ENCODE measurements at regions of chr11 and their contacts with region 1.

Region 1: DNA sequence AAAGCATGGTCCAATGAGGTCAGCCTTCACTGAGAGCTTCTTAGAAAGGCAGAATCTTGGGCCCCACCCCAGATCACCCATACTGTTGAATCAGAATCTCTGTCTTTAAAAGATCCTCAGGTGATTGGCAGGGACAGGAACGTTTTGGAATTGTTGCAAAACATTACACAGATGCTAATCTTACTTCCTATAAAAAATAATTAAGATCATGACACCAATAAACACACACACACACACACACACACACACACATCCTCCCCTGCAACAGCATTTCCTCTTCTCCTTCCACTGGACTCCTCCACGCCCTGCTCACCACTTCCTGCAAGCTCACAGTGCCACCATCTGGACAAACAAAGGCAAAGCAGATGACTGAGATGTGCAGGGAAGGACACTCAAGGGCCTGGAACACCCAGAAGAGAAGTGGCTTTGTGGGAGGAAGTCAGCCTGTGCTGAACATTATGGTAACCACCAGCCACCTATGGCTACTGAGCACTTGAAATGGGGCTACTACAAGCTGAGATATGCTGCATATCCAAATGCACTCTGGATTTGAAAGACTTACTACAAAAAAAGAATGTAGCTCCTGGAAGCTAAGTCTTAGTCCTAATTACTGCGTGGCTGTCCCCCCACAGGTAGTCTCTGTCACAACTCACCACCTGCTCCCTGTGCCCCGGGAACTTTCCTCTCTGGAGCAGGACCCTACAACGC is 65.6 kb downstream of the BTG4 start:
- DNase-seq: peak; percentile 89
- CTCF ChIP-seq: peak; percentile 93

Region 2: GRCh38 chr11:111283945-111284481 is 162.5 kb before region 1 on chr11:
- CTCF ChIA-PET with region 1: interaction called, 122 read pairs
- POLR2A ChIA-PET with region 1: interaction called, 7 read pairs
- DNase-seq: no peak
- CTCF ChIP-seq: no peak

Region 3: DNA sequence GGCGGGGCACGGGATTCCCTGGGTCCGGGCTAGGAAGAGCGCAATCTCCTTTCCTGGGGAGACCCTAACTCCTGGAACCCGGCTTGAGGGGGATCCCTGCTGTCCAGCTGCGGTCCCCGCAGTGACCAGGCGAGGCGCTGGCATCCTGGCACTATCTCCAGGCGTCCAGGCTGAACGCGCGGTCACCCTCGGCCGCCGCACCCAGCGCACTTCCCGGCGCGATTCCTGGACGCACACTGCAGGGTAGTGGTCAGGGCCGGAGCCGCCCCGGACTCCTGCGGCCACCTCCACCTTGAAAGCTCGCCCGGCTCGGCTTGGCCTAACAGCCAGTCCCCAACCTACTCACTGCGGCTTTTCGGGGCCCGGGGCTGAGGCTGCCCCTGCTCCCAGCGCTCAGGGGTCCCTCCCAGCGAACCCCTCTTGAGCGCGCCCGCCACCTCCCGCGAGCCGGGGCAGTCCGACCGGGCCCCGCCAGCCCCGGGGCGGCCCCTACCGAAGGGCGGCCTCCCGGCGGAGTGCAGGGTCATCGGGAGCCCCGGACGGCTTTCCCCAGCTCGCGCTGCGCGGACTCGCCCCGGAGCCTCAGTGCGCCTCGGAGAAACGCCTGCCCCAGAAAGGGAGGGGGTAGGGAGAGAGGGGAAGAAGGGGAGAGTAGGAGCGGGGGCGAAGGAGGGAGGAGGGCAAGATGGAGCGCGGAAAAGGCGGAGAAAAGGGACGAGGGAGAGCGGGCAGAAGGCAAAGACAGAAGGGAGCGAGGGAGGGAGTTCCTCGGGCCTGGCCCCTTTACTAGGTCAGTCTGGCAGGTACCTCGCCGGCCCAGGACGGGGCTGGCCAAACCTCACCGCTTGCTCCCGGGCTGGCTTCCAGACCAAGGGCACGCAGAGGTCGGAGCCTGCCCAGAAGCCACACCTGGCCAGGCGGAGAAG is 147.2 kb before region 1 on chr11:
- CTCF ChIA-PET with region 1: interaction called, 11 read pairs
- POLR2A ChIA-PET with region 1: no interaction called
- DNase-seq: peak; percentile 63
- CTCF ChIP-seq: peak; percentile 54

Region 4: DNA sequence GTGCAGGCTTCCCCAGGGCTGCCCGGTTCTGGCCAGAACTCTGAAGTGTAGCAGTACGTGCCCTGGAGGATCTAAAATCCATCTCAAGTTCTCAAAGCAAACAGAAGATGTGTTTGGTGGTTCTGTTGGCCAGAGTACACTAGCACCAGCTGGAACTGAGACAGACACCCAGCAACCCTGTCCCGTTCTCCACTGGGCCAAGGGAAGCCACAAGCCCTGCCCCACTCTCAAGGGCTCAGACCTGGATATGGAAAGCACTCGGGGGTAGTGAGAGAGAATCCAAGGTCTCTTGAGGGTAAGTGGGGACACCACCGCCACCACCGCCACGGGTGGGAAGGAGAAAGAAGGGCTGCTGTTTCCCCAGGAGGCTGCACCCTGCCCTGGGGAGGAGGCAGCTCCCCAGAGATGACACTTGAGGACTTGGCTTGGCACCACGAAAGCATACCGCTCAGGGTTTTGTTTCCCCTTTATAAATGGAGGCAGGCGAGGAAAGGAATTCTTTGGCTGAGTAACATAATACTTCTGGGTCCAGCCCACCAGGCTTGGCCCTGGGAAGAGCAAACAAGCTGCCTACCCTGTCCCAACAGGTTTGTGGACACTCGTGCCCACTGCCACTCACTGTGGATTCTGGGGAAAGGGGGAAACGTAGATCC is 11.4 kb before region 1 on chr11:
- CTCF ChIA-PET with region 1: interaction called, 75 read pairs
- POLR2A ChIA-PET with region 1: no interaction called
- DNase-seq: no peak
- CTCF ChIP-seq: no peak

Region 5: DNA sequence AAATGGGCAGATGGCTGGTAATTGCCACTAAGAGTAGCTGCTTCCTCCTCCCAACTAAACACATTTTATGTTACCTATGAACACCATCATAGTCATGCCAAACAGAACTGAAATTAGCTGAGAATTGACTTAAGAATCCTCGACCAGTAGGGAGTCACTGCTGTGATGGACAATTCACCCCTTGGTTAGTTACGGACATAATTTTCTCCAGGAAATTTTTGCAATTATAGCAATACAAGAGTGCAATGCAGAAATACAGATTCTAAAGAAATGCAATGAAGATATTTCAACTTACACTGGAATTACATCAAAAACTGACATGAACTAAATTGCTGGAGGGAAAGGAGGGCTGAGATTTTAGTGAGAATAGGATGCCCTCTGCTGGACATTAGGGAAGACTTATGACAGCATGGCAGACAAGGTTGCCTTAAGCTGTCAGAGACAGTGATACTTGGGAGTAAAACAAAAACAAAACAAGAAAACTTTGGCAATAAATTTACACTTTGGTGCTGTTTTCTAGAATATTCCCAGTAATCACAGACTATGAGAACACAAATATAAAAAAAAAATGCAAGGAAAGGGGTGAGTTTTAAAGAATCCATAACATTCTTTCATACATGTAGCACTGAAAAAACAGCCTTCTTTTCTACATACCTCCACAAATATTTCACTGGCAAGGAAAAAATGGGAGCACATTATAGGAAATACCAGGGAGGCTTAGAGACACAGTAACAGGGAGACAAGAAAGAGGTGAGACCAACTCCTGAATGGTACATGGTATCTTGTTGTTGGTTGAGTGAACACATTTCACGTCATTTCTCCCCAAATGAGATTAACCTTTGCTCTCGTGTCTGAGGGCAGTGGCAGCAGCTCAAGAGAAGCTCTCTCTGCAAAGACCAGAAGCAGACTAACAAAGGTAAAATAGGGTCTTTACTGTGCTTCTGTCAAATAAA is 330.8 kb after region 1 on chr11:
- CTCF ChIA-PET with region 1: no interaction called
- POLR2A ChIA-PET with region 1: no interaction called
- DNase-seq: peak; percentile 62
- CTCF ChIP-seq: peak; percentile 63